Activated naive CD4-positive, alpha-beta T cell treated with anti-CD3 and anti-CD28 coated beads for 36 hours (primary cell): ENCODE measurements at regions of chr17 and their contacts with region 1.

Region 1: DNA sequence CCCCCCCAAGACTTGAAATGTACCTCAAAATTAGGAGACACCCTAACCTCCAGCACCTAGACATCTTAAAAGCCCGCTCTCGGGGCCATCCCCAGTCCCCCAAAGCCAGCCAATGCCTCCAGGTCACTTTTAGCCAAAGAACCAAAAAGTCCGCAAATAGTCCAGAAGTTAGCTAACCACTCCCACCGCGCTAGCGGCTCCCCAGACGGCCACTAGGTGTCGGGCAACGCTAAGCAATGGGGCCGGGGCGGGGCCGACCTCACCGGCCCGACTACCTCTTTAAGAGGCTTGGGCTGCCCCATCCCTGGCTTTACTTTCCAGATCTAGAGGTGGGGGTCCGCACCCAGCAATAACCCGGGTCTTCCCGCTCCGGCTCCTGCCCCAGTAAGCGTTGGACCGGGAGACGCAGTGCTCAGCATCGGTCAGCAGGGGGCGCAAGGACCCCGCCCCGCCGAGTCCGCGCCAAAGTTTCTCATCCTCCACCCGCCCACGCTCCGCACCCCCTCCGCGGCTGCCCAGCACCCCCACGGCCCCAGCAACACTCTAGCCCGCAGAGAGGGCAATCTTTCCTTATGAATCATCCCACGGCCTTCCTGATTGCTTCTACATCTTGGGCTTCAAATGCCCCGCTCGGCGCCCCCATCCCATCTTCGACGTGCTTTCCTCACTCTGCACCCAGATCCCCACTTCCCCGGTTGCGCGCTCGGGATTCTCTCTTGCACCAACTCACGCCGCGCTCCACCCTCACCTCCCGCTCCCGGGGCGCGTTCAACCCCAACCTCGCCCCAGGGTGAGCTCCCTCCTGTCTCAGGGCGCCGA is 765 bp downstream of the COL1A1 start:
- DNase-seq: peak; percentile 88
- H3K4me3 Mint-ChIP-seq: peak overlapping the region; percentile 56
- H3K27ac Mint-ChIP-seq: no peak overlapping the region
- H3K4me1 Mint-ChIP-seq: peaks cover 17% of the 10 kb centered on the region
- H3K27me3 Mint-ChIP-seq: peaks cover 35% of the 10 kb centered on the region

Region 2: GRCh38 chr17:50139950-50140871 is 60.5 kb before region 1 on chr17:
- CTCF ChIA-PET with region 1: interaction called, 6 read pairs
- intact Hi-C with region 1: loop called (anchors 1 kb)
- DNase-seq: peak; percentile 91
- H3K4me3 Mint-ChIP-seq: peak overlapping the region; percentile 44
- H3K27ac Mint-ChIP-seq: peak overlapping the region; percentile 78
- H3K4me1 Mint-ChIP-seq: peaks cover 49% of the 10 kb centered on the region
- H3K27me3 Mint-ChIP-seq: no peaks in the 10 kb centered on the region

Region 3: DNA sequence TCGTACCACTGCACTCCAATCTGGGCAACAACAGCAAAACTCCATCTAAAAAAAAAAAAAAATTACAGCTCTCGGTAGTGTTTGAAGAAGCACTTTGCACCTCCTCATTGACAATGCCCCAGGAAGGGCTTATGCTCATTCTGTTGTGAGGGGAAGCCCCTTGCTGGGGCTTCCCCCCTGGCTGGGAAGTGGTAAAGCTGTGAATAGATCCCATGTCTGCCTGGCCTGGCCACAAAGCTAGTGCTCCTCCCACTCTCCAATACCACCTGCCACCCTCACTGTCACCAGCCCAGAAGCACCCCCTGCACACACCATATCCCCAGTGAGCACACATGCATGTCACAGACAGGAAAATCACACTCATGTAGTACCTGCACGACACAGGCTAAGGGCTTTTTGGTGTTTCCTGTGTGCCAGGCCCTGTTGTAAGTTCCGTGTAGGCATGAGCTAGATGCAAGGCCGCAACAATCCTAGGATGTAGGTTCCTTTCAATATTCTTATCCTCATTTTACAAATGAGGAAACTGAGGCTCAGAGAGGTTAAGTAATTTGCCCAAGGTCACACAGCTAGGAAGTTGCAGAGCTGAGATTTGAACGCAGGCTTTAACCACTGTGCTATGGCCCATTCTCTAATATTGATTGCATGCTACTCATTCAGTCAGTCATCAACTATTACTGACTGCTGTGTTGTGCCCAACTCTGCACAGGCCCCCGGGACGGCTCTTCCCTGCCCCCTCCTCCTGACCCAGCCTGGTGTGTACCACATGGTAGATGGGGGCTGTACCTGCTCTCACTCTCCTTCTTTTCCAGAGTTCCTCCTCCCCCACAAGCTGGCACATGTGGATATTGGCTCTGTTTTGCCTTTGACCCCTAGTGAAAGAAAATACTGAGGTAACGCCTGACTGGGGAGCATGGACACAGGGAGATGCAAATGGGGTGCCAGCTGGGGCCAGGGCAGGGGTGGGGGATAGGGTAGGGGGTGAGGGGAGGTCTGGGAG is 12.7 kb after region 1 on chr17:
- CTCF ChIA-PET with region 1: interaction called, 87 read pairs
- intact Hi-C with region 1: no loop called
- DNase-seq: peak; percentile 89
- H3K4me3 Mint-ChIP-seq: no peak overlapping the region
- H3K27ac Mint-ChIP-seq: peak overlapping the region; percentile 17
- H3K4me1 Mint-ChIP-seq: peaks cover 29% of the 10 kb centered on the region
- H3K27me3 Mint-ChIP-seq: peaks cover 2% of the 10 kb centered on the region

Region 4: GRCh38 chr17:50269477-50270434 is 69.1 kb after region 1 on chr17:
- CTCF ChIA-PET with region 1: interaction called, 225 read pairs
- intact Hi-C with region 1: loop called (anchors 1 kb)
- DNase-seq: peak; percentile 86
- H3K4me3 Mint-ChIP-seq: no peak overlapping the region
- H3K27ac Mint-ChIP-seq: no peak overlapping the region
- H3K4me1 Mint-ChIP-seq: peaks cover 13% of the 10 kb centered on the region
- H3K27me3 Mint-ChIP-seq: peaks cover 13% of the 10 kb centered on the region

Region 5: GRCh38 chr17:50304781-50305404 is 104.2 kb after region 1 on chr17:
- CTCF ChIA-PET with region 1: interaction called, 12 read pairs
- intact Hi-C with region 1: no loop called
- DNase-seq: no peak
- H3K4me3 Mint-ChIP-seq: no peak overlapping the region
- H3K27ac Mint-ChIP-seq: no peak overlapping the region
- H3K4me1 Mint-ChIP-seq: peaks cover 17% of the 10 kb centered on the region
- H3K27me3 Mint-ChIP-seq: peaks cover 4% of the 10 kb centered on the region

Region 6: GRCh38 chr17:50345432-50346312 is 145.0 kb after region 1 on chr17 and contains the start of gene XYLT2:
- CTCF ChIA-PET with region 1: interaction called, 10 read pairs
- intact Hi-C with region 1: no loop called
- DNase-seq: peak; percentile 90
- H3K4me3 Mint-ChIP-seq: peak within 1 kb of the TSS; percentile 89
- H3K27ac Mint-ChIP-seq: peak within 1 kb of the TSS; percentile 88
- H3K4me1 Mint-ChIP-seq: peaks cover 29% of the 10 kb centered on the region
- H3K27me3 Mint-ChIP-seq: no peaks in the 10 kb centered on the region
- total RNA-seq, gene XYLT2: 21.1 to 21.8 TPM